Panc1 (cell line): ENCODE measurements at regions of chr1 and their contacts with region 1.

Region 1: GRCh38 chr1:92623187-92623778 is 136.6 kb upstream of the GFI1 start:
- DNase-seq: no peak
- ATAC-seq: no peak
- H3K4me3 ChIP-seq: no peak overlapping the region
- H3K27ac ChIP-seq: no peak overlapping the region
- H3K4me1 ChIP-seq: no peaks in the 10 kb centered on the region
- H3K27me3 ChIP-seq: no peaks in the 10 kb centered on the region
- CTCF ChIP-seq: peak; percentile 22; the same call in 1 of the 2 replicates

Region 2: GRCh38 chr1:92306020-92306419 is 317.3 kb before region 1 on chr1:
- CTCF ChIA-PET with region 1: no interaction called
- POLR2A ChIA-PET with region 1: no interaction called
- in situ Hi-C with region 1: no loop called
- intact Hi-C with region 1: loop called (anchors 5 kb)
- DNase-seq: no peak
- ATAC-seq: no peak
- H3K4me3 ChIP-seq: no peak overlapping the region
- H3K27ac ChIP-seq: no peak overlapping the region
- H3K4me1 ChIP-seq: no peaks in the 10 kb centered on the region
- H3K27me3 ChIP-seq: no peaks in the 10 kb centered on the region
- CTCF ChIP-seq: no peak